ENCODE measurements at regions of chr7 and their contacts with region 1.

Region 1: GRCh38 chr7:146090023-146090645 is 26.5 kb upstream of the CNTNAP2 start:
- DNase-seq: peak; percentile 83
- H3K4me3 ChIP-seq: no peak overlapping the region
- H3K27ac ChIP-seq: peak overlapping the region; percentile 28
- H3K4me1 ChIP-seq: peaks cover 22% of the 10 kb centered on the region
- CTCF ChIP-seq: peak; percentile 98

Region 2: GRCh38 chr7:145036604-145037405 is 1053.3 kb before region 1 on chr7:
- CTCF ChIA-PET with region 1: no interaction called
- POLR2A ChIA-PET with region 1: no interaction called
- intact Hi-C with region 1: loop called (anchors 1 kb)
- DNase-seq: peak; percentile 65
- H3K4me3 ChIP-seq: no peak overlapping the region
- H3K27ac ChIP-seq: no peak overlapping the region
- H3K4me1 ChIP-seq: no peaks in the 10 kb centered on the region
- CTCF ChIP-seq: peak; percentile 94

Region 3: DNA sequence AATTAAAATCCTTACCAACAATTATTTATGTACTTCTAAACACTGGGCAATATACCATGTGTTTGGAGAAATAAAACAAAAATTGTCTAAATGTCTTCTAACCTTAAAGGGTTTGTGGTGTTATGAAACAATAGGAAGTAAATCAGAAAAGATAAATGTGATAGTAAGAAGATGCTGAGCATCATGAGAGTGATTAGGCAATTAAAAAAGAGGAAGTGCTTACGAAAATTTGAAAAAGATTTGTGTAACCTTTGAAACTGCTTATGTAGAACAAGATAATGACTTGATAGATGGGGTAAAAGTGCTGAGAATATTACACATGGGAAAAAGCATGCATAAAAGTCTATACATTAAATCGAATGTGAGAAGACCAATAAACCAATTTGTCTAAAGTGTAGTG is 546.9 kb before region 1 on chr7:
- CTCF ChIA-PET with region 1: no interaction called
- POLR2A ChIA-PET with region 1: no interaction called
- intact Hi-C with region 1: loop called (anchors 10 kb)
- DNase-seq: no peak
- H3K4me3 ChIP-seq: no peak overlapping the region
- H3K27ac ChIP-seq: no peak overlapping the region
- H3K4me1 ChIP-seq: no peaks in the 10 kb centered on the region
- CTCF ChIP-seq: no peak

Region 4: GRCh38 chr7:145655666-145656065 is 434.5 kb before region 1 on chr7:
- CTCF ChIA-PET with region 1: no interaction called
- POLR2A ChIA-PET with region 1: no interaction called
- intact Hi-C with region 1: loop called (anchors 5 kb)
- DNase-seq: no peak
- H3K4me3 ChIP-seq: no peak overlapping the region
- H3K27ac ChIP-seq: no peak overlapping the region
- H3K4me1 ChIP-seq: no peaks in the 10 kb centered on the region
- CTCF ChIP-seq: no peak

Region 5: DNA sequence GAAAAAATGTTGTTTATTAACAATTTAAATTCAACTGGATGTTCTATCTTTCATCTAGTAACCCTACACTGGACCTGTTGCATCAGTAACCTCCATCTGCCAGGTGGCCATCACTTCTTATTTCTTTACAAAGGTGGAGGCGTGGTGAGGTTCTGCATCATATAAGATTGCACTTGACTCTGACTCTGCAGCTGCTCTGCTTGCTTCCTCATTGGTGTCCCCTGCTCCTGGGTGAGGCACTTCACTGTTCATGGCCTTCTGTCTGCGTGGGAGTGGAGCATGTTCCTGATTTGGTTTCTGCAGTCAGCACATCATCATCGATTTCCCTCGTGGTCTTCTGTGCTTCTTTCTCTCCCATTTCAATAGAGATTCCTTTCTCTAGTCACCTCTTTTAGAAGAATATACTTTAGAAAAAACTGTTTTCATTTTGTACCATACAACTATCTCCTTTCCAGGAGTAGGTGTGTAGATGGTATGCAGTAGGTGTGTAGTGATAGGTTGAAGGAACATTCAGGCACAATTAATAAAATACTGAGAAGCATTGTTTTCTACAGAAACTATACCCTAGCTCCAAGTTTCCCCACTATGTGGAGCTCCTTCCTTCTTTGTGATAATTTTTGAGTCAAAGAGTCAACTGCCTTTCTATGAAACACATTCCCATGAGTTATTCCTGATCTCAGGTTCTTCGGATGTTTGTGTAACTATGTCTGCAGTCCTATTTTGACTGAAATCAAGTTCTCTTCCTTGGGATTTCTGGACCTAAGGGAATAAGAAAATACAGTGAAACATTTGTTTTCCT is 205.2 kb before region 1 on chr7:
- CTCF ChIA-PET with region 1: interaction called, 3 read pairs
- POLR2A ChIA-PET with region 1: no interaction called
- intact Hi-C with region 1: loop called (anchors 1 kb)
- DNase-seq: peak; percentile 64
- H3K4me3 ChIP-seq: no peak overlapping the region
- H3K27ac ChIP-seq: no peak overlapping the region
- H3K4me1 ChIP-seq: peaks cover 7% of the 10 kb centered on the region
- CTCF ChIP-seq: peak; percentile 64

Region 6: GRCh38 chr7:145957160-145957890 is 132.8 kb before region 1 on chr7:
- CTCF ChIA-PET with region 1: no interaction called
- POLR2A ChIA-PET with region 1: no interaction called
- intact Hi-C with region 1: loop called (anchors 5 kb)
- DNase-seq: peak; percentile 88
- H3K4me3 ChIP-seq: peak overlapping the region; percentile 47
- H3K27ac ChIP-seq: peak overlapping the region; percentile 100
- H3K4me1 ChIP-seq: peaks cover 44% of the 10 kb centered on the region
- CTCF ChIP-seq: no peak

Region 7: GRCh38 chr7:146208492-146208891 is 118.4 kb after region 1 on chr7:
- CTCF ChIA-PET with region 1: no interaction called
- POLR2A ChIA-PET with region 1: no interaction called
- intact Hi-C with region 1: no loop called
- DNase-seq: no peak
- H3K4me3 ChIP-seq: no peak overlapping the region
- H3K27ac ChIP-seq: no peak overlapping the region
- H3K4me1 ChIP-seq: no peaks in the 10 kb centered on the region
- CTCF ChIP-seq: no peak

Measured in OCI-LY7 (cell line).